ENCODE measurements at regions of chr1 and their contacts with region 1.

Region 1: GRCh38 chr1:147172168-147172992 is at the start of gene PRKAB2:
- DNase-seq: peak; percentile 85 to 98
- H3K4me3 ChIP-seq: peak within 1 kb of the TSS; percentile 76 to 88
- H3K27ac ChIP-seq: peak within 1 kb of the TSS; percentile 89 to 93
- H3K4me1 ChIP-seq: peaks cover 3 to 13% of the 10 kb centered on the region in 2 donors
- H3K27me3 ChIP-seq: no peaks in the 10 kb centered on the region
- CTCF ChIP-seq: peak; percentile 73 to 97 (median 89)
- total RNA-seq, gene PRKAB2: 15.4 TPM

Region 2: GRCh38 chr1:147204080-147204479 is 31.7 kb after region 1 on chr1:
- intact Hi-C with region 1: no loop called
- DNase-seq: no peak
- H3K4me3 ChIP-seq: no peak overlapping the region
- H3K27ac ChIP-seq: no peak overlapping the region
- H3K4me1 ChIP-seq: no peaks in the 10 kb centered on the region
- H3K27me3 ChIP-seq: no peaks in the 10 kb centered on the region
- CTCF ChIP-seq: no peak

Region 3: DNA sequence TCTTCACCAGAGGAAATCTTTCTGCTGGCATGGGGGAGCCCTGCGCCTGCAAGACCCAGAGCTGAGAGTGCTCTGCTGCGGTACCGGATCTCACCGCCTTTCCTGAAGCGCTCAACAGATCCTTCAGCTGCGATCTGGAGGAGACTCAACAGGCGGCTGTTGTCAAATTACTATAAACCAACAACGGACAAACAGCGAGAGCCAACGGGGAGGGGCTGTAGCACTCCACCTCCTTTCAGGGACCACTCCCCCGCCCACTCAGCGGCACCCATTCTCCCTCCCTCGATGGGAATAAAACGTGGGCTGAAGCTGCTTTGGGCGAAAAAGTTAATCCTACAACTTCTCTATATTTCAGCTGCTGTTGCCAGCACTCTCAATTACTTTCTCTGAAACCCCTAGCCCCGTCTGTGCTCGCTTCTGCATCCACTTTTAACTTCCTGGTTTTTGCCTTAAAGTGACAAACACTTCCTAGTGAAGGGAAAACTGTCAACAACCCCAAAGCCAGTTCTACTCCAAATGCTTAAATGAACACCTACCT is 52.9 kb after region 1 on chr1 and contains the start of gene FMO5:
- intact Hi-C with region 1: loop called (anchors 2 kb)
- DNase-seq: peak in 1 of 2 donors; percentile 82
- H3K4me3 ChIP-seq: peak within 1 kb of the TSS; percentile 74
- H3K27ac ChIP-seq: peak within 1 kb of the TSS; percentile 73 to 78
- H3K4me1 ChIP-seq: no peaks in the 10 kb centered on the region
- H3K27me3 ChIP-seq: no peaks in the 10 kb centered on the region
- CTCF ChIP-seq: peak in 2 of 3 experiments; percentile 25 to 31
- total RNA-seq, gene FMO5: 19.6 TPM

Region 4: GRCh38 chr1:147242439-147243227 is 70.3 kb after region 1 on chr1 and contains the start of gene CHD1L:
- intact Hi-C with region 1: loop called (anchors 1 kb)
- DNase-seq: peak; percentile 81 to 98
- H3K4me3 ChIP-seq: peak within 1 kb of the TSS; percentile 68 to 91
- H3K27ac ChIP-seq: peak within 1 kb of the TSS; percentile 96 to 98
- H3K4me1 ChIP-seq: peaks cover 0 to 3% of the 10 kb centered on the region in 2 donors
- H3K27me3 ChIP-seq: no peaks in the 10 kb centered on the region
- CTCF ChIP-seq: peak; percentile 79 to 96 (median 85)
- total RNA-seq, gene CHD1L: 8.0 TPM

Region 5: GRCh38 chr1:147599362-147600118 is 427.2 kb after region 1 on chr1:
- intact Hi-C with region 1: loop called (anchors 1 kb)
- DNase-seq: peak; percentile 83 to 98
- H3K4me3 ChIP-seq: peak overlapping the region; percentile 88 to 90
- H3K27ac ChIP-seq: peak overlapping the region; percentile 91 to 92
- H3K4me1 ChIP-seq: peaks cover 0 to 15% of the 10 kb centered on the region in 2 donors
- H3K27me3 ChIP-seq: no peaks in the 10 kb centered on the region
- CTCF ChIP-seq: no peak